AG04450 (cell line): ENCODE measurements at regions of chr20 and their contacts with region 1.

Region 1: DNA sequence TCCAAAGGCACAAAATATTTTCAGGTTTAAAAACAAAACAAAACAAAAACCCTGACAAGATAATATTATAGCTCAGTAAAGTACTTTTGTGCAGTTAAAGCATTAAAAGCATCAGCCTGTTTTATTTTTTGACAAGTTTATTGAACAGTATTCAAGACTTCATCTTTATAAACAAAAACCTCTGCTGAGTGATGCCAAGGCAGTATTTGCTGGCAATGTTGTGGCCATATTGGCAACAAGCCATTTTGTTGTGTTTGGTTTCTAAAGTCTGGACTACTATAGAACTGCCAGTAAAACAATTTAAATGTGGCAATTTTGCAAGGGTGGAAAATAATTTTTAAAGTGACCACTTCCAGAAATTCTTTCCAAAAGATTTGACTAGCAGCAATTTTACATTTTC is 15.9 kb downstream of the CPNE1 start:
- DNase-seq: no peak
- H3K4me3 ChIP-seq: no peak overlapping the region
- H3K27ac ChIP-seq: no peak overlapping the region
- H3K27me3 ChIP-seq: no peaks in the 10 kb centered on the region
- CTCF ChIP-seq: no peak

Region 2: DNA sequence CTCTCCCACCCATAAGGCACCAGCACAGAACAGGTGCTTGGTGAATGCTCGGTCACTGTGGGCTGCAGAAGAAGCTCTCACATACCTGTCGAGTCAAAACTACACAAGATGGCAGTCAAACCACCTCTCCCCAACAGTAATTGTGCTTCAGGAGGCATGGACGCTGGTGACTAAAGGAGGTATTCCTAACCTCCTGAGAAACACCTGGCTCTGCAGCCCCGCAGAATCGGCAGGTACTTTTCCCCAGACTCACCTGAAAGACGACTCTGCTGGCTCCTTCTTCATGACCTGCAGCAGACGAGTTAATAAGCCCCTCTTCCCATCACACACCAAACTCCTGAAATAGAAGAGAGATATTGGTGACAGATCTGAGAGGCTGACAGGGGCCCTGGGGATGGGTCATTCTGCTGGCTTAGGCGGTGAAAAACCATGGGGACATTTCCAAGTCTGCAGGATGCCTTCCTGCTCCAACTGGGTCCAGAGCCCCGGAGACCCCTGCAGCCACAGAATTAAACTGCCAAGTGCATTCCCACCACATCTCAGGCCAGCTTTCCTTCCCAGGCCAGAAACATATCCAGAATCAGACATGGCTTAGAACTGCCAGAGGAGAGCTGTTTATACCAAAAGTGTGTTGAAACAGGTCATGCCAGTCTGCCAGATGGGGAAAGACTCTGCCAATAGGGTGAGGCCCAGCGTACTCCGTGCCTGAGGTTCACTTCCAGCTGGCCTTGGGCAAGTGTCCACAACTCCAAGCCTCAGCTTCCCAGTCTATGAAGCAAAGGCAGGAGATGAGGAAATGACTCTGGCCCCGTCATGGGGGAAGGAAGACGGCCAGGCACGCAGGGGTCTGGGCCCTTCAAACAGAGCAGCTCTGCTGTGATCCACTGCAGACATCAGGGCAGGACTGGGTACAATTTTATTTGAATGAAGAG is 640.2 kb before region 1 on chr20:
- CTCF ChIA-PET with region 1: no interaction called
- POLR2A ChIA-PET with region 1: no interaction called
- DNase-seq: no peak
- H3K4me3 ChIP-seq: no peak overlapping the region
- H3K27ac ChIP-seq: no peak overlapping the region
- H3K27me3 ChIP-seq: no peaks in the 10 kb centered on the region
- CTCF ChIP-seq: no peak

Region 3: DNA sequence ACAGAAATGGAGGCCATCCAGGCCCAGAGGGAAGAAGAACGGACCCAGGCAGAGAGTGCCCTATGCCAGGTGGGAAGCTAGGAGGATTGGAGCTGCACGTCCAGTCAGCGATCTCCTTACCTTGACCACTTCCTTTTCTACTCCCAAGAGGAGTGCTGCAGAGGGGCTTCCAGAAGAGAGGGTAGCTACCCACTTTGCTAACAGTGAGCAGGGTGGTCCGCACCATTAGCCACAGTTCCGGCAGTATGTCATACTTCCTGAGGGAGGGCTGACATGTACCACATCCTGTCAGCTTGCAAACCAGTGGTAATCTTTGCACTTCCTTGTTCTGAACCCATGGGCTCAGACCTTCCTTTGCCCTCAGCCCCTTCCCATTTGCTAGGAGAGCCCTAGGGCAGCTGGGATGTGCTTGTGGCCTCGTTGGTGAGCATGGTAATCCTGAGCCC is 158.1 kb before region 1 on chr20:
- CTCF ChIA-PET with region 1: no interaction called
- POLR2A ChIA-PET with region 1: interaction called, 12 read pairs
- DNase-seq: no peak
- H3K4me3 ChIP-seq: no peak overlapping the region
- H3K27ac ChIP-seq: no peak overlapping the region
- H3K27me3 ChIP-seq: no peaks in the 10 kb centered on the region
- CTCF ChIP-seq: no peak

Region 4: GRCh38 chr20:35629427-35630145 is 19.2 kb before region 1 on chr20:
- CTCF ChIA-PET with region 1: no interaction called
- POLR2A ChIA-PET with region 1: no interaction called
- DNase-seq: no peak
- H3K4me3 ChIP-seq: no peak overlapping the region
- H3K27ac ChIP-seq: no peak overlapping the region
- H3K27me3 ChIP-seq: no peaks in the 10 kb centered on the region
- CTCF ChIP-seq: no peak

Region 5: DNA sequence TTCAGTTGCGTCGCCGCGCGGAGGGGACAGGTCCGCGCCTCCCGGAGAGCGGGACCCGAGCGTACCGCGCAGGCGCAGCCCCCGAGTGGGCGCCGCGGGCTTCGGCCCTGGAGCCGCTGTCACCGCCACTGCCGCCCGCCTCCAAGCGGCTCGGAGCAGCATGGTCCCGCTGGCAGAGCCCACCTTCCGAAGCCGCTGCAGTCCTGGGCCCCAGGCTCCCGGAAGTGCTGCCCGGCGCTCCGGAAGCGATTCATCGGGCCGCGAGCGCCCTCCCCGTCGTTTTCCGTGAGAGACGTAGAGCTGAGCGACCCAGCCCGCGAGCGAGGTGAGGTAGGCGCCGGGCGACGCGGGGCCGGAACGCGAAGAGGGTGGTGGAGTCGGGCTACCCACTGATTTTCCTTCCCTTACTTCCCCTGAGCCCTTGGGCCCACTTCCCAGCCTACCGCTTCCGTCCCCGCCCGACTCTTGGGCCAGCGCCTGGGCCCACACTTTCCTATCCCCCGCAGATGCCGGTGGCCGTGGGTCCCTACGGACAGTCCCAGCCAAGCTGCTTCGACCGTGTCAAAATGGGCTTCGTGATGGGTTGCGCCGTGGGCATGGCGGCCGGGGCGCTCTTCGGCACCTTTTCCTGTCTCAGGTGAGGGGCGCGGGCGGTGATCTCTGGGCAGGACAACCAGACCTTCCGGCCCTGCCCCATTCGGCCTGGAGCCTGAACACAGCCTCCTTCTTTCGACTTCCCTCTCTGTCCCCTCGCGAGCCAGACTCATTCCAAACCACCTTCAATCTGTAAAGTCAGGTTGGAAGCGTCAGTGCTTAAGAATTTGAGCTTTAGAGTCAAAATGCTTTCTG is 50.5 kb after region 1 on chr20 and contains the starts of genes NFS1 and ROMO1:
- CTCF ChIA-PET with region 1: no interaction called
- POLR2A ChIA-PET with region 1: no interaction called
- DNase-seq: peak; percentile 41
- H3K4me3 ChIP-seq: peak within 1 kb of the TSS; percentile 96
- H3K27ac ChIP-seq: peak within 1 kb of the TSS; percentile 88
- H3K27me3 ChIP-seq: no peaks in the 10 kb centered on the region
- CTCF ChIP-seq: peak; percentile 24; the same call in 1 of the 2 replicates
- polyA plus RNA-seq, gene NFS1: 43.8 and 44.4 TPM in 2 replicates
- polyA plus RNA-seq, gene ROMO1: 177 and 261 TPM in 2 replicates